ENCODE measurements at regions of chr20 and their contacts with region 1.

Region 1: GRCh38 chr20:12970372-12970821 is 38.4 kb upstream of the SPTLC3 start:
- DNase-seq: no peak
- ATAC-seq: peak; percentile 76

Region 2: DNA sequence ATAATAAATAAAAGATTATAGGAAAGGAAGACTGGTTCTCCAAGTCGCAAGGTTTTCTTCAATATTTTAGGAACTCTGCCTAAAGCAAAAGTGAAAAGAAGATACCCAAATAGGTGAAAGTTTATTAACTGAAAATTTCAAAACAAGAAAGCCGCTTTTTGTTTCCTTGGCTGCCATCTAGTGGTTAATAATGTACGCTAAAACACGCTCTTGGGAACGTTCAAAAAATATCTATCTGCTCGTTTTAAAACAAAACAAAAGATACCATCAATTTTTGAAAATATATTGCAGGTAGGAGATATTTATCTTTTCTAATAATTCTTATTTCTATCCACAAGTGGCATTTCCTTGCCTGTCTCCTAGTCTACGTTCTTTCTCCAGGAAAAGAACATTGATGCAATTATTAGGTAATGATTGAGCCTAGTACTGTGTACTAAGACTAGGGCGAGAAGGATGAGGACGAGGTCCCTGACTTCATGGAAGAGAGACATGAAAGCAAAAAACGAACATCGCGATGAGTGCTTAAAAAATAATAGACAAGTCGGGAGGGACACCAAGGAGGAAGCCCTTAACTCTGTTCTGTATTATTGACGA is 135.6 kb after region 1 on chr20:
- intact Hi-C with region 1: loop called (anchors 10 kb)
- DNase-seq: no peak
- ATAC-seq: peak; percentile 61

Measured in sciatic nerve (tissue), 2 donors.